MCF 10A (cell line): ENCODE measurements at regions of chr12 and their contacts with region 1.

Region 1: DNA sequence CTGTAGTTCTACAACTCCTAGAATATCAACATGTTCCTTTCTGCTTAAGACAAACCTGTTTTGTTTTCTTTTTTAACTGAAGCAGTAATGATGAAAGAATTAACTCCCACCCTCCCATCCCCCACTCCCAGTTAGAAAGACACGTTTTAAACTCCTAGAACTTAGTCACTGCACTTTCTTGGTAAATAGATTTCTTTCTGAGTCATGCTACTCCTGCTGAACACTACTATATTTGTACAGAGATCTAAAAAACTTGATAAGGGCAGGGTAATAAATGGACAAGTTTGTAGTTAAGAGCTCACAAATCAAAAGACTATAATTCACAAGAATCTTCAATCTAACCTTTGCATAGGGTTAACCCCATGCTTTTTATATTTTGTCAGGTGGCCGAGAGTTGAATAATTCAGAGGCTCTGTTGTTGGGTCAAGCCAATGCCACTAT is 118.9 kb upstream of the PTPRB start:
- DNase-seq: peak; percentile 74
- H3K4me3 Mint-ChIP-seq: no peak overlapping the region
- H3K27ac Mint-ChIP-seq: peak overlapping the region; percentile 80
- H3K4me1 Mint-ChIP-seq: peaks cover 6% of the 10 kb centered on the region
- H3K27me3 Mint-ChIP-seq: no peaks in the 10 kb centered on the region
- CTCF ChIP-seq: no peak

Region 2: GRCh38 chr12:70815971-70816391 is 59.8 kb after region 1 on chr12:
- CTCF ChIA-PET with region 1: no interaction called
- POLR2A ChIA-PET with region 1: no interaction called
- intact Hi-C with region 1: loop called (anchors 5 kb)
- DNase-seq: no peak
- H3K4me3 Mint-ChIP-seq: no peak overlapping the region
- H3K27ac Mint-ChIP-seq: peak overlapping the region; percentile 84
- H3K4me1 Mint-ChIP-seq: peaks cover 20% of the 10 kb centered on the region
- H3K27me3 Mint-ChIP-seq: no peaks in the 10 kb centered on the region
- CTCF ChIP-seq: no peak